ENCODE measurements at regions of chr19 and their contacts with region 1.

Region 1: DNA sequence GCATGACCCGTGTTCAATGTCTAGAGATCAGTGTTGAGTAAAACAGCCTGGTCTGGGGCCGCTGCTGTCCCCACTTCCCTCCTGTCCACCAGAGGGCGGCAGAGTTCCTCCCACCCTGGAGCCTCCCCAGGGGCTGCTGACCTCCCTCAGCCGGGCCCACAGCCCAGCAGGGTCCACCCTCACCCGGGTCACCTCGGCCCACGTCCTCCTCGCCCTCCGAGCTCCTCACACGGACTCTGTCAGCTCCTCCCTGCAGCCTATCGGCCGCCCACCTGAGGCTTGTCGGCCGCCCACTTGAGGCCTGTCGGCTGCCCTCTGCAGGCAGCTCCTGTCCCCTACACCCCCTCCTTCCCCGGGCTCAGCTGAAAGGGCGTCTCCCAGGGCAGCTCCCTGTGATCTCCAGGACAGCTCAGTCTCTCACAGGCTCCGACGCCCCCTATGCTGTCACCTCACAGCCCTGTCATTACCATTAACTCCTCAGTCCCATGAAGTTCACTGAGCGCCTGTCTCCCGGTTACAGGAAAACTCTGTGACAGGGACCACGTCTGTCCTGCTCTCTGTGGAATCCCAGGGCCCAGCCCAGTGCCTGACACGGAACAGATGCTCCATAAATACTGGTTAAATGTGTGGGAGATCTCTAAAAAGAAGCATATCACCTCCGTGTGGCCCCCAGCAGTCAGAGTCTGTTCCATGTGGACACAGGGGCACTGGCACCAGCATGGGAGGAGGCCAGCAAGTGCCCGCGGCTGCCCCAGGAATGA is 1.5 kb upstream of the CEACAM5 start:
- DNase-seq: peak; percentile 75
- H3K4me3 Mint-ChIP-seq: peak overlapping the region; percentile 62
- H3K27ac Mint-ChIP-seq: no peak overlapping the region
- H3K4me1 Mint-ChIP-seq: peaks cover 2% of the 10 kb centered on the region
- H3K27me3 Mint-ChIP-seq: peaks cover 25% of the 10 kb centered on the region

Region 2: DNA sequence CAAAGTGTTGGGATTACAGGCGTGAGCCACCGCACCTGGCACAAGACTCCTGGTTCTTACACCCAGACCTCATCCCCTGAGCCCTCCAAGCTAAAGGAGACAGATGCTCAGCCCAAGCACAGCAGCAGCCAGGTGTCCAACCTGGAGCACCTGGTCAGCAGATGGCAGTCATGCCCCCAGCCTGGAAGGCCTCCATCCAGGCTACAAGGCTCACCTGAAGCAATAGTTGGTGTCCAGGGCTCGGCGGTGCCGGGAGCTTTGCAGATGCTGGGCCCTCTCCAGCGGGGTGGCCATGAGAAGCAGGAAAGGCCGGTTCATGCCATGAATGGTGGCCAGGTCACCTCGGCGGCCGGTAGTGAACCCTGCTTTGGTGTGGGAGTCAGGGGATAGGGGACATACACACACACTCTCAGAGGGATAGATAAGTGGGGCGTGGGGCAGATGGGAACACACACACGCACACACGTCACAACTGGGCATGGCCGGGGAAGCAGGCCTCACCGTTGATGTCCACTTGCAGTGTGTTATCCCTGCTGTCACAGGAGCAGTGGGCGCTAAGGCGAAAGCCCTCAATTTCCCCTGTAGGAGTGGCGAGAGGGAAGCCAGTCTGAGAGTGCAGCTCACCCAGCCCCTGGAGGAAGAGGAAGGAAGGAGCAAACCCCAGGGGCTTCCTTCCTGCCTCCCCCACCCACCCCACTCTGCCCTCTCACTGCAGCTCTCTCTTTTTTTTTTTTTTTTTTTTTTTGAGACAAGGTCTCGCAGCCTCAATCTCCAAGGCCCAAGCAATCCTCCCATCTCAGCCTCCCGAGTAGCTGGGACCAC is 365.0 kb before region 1 on chr19:
- CTCF ChIA-PET with region 1: no interaction called
- intact Hi-C with region 1: no loop called
- DNase-seq: peak; percentile 29
- H3K4me3 Mint-ChIP-seq: no peak overlapping the region
- H3K27ac Mint-ChIP-seq: no peak overlapping the region
- H3K4me1 Mint-ChIP-seq: peaks cover 36% of the 10 kb centered on the region
- H3K27me3 Mint-ChIP-seq: no peaks in the 10 kb centered on the region

Region 3: GRCh38 chr19:41606215-41606837 is 100.6 kb before region 1 on chr19:
- CTCF ChIA-PET with region 1: no interaction called
- intact Hi-C with region 1: no loop called
- DNase-seq: no peak
- H3K4me3 Mint-ChIP-seq: no peak overlapping the region
- H3K27ac Mint-ChIP-seq: no peak overlapping the region
- H3K4me1 Mint-ChIP-seq: no peaks in the 10 kb centered on the region
- H3K27me3 Mint-ChIP-seq: peaks cover 5% of the 10 kb centered on the region

Region 4: GRCh38 chr19:41641879-41642485 is 64.9 kb before region 1 on chr19:
- CTCF ChIA-PET with region 1: interaction called, 17 read pairs
- intact Hi-C with region 1: loop called (anchors 5 kb)
- DNase-seq: peak; percentile 85
- H3K4me3 Mint-ChIP-seq: no peak overlapping the region
- H3K27ac Mint-ChIP-seq: no peak overlapping the region
- H3K4me1 Mint-ChIP-seq: peaks cover 29% of the 10 kb centered on the region
- H3K27me3 Mint-ChIP-seq: peaks cover 1% of the 10 kb centered on the region

Region 5: DNA sequence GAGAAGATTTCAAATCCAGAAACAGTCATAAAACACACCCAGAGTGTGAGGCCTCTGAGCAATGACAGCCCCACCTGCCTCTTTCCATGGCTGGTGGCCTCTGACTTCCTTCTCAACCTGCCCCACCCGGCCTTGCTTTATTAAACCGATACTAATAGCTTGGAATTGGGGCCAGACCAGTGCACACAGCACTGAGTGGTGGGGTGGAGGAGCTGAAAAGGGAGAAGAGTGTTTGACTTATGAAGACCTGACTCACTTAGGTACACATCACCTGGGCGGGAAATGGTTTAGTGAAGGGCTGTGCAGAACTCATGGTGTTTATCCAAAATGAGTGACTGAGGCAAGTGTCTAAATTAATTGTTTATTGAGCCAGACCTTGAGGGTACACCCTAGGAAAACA is 27.7 kb after region 1 on chr19:
- CTCF ChIA-PET with region 1: interaction called, 13 read pairs
- intact Hi-C with region 1: no loop called
- DNase-seq: no peak
- H3K4me3 Mint-ChIP-seq: no peak overlapping the region
- H3K27ac Mint-ChIP-seq: no peak overlapping the region
- H3K4me1 Mint-ChIP-seq: peaks cover 6% of the 10 kb centered on the region
- H3K27me3 Mint-ChIP-seq: peaks cover 27% of the 10 kb centered on the region

Region 6: DNA sequence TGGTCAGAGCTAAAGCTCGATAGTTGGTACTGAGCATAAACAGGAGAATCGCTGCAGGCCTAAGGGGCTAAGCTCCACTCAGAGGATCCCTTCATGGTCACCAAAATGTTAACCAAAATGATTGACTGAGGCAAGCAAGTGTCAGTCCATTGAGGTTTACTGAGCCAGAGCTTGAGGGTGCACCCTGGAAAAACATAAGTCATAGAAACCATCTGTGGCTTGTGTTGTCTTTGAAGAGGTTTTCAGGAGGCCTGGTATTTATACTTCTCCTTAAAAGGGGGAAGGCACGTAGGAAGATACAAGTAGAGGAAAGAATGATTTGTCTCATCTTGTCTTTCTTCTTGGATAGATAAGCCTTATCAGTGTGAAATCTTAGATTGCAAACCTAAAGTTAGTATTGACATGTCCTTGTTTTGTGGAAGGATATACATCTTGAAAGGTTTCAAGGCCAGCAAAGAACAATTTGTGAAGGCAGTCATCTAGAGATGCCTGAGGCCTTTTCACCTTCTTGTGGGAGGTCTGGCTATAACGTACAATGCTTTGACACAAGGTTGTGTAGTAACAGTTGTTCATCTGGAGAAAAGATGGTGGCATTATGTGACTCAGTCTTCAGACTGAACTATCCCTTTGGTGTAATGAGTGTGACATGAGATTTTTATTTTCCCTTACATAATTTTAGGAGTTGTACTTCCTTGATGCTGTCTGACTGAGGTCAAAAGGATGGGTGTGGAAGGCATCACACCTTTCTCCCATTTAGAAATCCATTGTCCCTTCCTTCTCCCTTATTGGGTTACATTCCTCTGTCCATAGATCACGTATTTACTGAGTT is 33.7 kb after region 1 on chr19:
- CTCF ChIA-PET with region 1: interaction called, 58 read pairs
- intact Hi-C with region 1: no loop called
- DNase-seq: no peak
- H3K4me3 Mint-ChIP-seq: no peak overlapping the region
- H3K27ac Mint-ChIP-seq: no peak overlapping the region
- H3K4me1 Mint-ChIP-seq: peaks cover 20% of the 10 kb centered on the region
- H3K27me3 Mint-ChIP-seq: peaks cover 19% of the 10 kb centered on the region

Region 7: GRCh38 chr19:41746593-41747227 is 39.8 kb after region 1 on chr19:
- CTCF ChIA-PET with region 1: interaction called, 58 read pairs
- intact Hi-C with region 1: loop called (anchors 1 kb)
- DNase-seq: peak; percentile 78
- H3K4me3 Mint-ChIP-seq: no peak overlapping the region
- H3K27ac Mint-ChIP-seq: no peak overlapping the region
- H3K4me1 Mint-ChIP-seq: peaks cover under 1% of the 10 kb centered on the region
- H3K27me3 Mint-ChIP-seq: peaks cover 47% of the 10 kb centered on the region

Region 8: DNA sequence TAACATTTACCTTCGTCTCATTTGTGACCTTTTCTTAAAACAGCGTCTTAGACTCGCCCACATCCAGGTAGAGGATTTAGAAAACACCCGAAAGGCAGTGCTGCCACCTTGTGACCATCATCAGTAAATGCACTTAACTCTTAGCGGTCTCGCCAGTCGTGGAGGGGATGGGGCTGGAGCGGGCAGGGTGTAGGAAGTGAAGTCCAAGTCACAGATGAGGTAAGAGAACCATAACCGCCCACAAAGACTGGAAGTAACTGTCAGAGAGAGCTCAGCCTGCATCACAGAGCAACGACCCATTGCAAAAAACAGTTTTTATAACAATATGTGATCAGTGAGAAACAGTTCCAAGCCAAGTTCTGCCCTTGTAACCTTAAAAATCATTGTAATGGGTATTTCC is 78.7 kb after region 1 on chr19:
- CTCF ChIA-PET with region 1: interaction called, 11 read pairs
- intact Hi-C with region 1: loop called (anchors 1 kb)
- DNase-seq: peak; percentile 86
- H3K4me3 Mint-ChIP-seq: no peak overlapping the region
- H3K27ac Mint-ChIP-seq: no peak overlapping the region
- H3K4me1 Mint-ChIP-seq: peaks cover 17% of the 10 kb centered on the region
- H3K27me3 Mint-ChIP-seq: peaks cover 40% of the 10 kb centered on the region

Region 9: DNA sequence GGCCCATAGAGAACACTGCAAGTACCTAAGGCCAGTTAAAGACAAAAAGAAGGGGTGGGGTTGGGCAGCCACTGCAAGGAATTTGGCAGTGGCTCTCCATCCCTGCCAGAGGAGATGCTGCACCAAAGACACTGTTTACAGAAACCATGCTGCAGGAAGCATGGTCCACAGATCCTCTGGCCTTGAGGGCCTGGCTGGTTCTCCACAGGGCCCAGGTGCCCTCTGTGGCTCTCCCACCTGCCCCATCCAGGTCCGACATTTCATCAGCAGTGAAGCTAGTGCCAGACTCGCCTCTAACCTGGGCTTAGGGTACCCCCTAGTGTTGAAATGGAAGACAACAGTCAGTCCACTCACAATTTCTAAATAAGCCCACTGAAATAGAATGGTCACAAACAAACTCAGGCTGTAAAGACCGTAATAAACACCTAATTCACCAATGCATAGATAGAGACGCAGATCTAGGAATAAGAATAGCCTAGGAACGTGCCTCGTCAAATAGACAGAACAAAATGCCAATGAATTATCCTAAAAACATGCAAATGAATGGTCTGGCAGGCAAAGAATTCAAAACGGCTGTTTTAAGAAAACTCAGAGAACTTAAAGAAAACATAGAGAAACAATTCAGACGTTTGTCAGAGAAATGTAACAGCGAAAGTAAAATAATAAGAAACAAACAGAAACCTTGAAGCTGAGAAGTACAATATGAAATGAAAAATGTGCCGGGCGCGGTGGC is 114.2 kb after region 1 on chr19:
- CTCF ChIA-PET with region 1: no interaction called
- intact Hi-C with region 1: loop called (anchors 2 kb)
- DNase-seq: peak; percentile 72
- H3K4me3 Mint-ChIP-seq: no peak overlapping the region
- H3K27ac Mint-ChIP-seq: no peak overlapping the region
- H3K4me1 Mint-ChIP-seq: no peaks in the 10 kb centered on the region
- H3K27me3 Mint-ChIP-seq: peaks cover 5% of the 10 kb centered on the region

Region 10: GRCh38 chr19:42831271-42832019 is 1124.5 kb after region 1 on chr19:
- CTCF ChIA-PET with region 1: no interaction called
- intact Hi-C with region 1: no loop called
- DNase-seq: no peak
- H3K4me3 Mint-ChIP-seq: no peak overlapping the region
- H3K27ac Mint-ChIP-seq: no peak overlapping the region
- H3K4me1 Mint-ChIP-seq: no peaks in the 10 kb centered on the region
- H3K27me3 Mint-ChIP-seq: peaks cover 12% of the 10 kb centered on the region

Measured in activated naive CD4-positive, alpha-beta T cell treated with anti-CD3 and anti-CD28 coated beads for 36 hours (primary cell).